HEK293T (cell line): ENCODE measurements at regions of chr2 and their contacts with region 1.

Region 1: GRCh38 chr2:20446917-20447436 is at the start of gene RHOB:
- DNase-seq: peak; percentile 98

Region 2: DNA sequence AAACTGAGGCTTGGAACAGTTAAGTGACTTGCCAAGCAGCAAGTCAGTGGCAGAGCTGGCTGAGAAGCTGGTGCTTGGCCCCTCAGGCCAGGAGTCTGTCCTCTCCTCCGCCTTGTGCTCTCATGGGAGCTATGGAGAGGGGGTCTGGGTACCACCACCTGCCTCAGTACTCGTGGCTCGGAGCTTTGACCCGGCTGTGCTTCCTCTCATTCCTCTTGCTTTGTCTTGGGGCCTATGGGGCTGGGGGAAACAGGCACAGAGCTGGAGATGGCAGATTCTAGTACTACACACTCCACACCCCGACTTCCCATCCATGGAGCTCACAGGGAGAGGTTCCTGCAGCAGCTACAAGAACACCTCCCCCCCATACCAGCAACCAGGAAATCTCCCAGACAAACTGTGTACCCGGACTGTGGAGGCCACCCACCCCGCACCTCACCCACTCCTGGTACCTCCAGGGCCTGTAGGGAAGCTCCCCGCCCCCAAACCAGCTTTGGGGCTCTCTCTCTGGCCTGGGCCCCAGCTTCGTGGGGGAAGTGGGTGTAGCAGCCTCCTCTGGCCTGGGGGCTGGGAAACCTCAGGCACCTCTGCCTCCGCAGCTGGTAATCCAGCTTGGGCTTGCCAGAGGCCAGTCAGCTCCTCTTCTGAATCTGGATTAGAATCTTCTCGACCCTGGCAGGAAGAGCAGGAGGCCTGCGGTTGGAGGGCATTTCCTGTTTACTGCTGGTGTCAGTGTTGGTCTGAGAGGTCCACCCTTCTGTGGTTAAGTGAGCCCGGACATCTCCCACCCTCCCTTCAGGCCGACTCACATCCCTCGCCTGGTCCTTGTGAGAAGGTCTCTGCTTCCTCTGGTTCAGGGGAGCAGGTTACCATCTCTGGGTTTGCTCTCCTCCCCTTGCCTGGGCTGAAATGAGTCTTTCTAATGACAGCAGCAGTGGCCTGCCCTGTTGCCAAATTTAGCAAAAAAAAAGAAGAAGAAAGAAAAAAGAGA is 22.4 kb before region 1 on chr2:
- CTCF ChIA-PET with region 1: interaction called, 6 read pairs
- POLR2A ChIA-PET with region 1: interaction called, 44 read pairs
- DNase-seq: no peak

Region 3: GRCh38 chr2:20509766-20510495 is 63.0 kb after region 1 on chr2:
- CTCF ChIA-PET with region 1: interaction called, 3 read pairs
- POLR2A ChIA-PET with region 1: interaction called, 13 read pairs
- DNase-seq: peak; percentile 80

Region 4: GRCh38 chr2:20584637-20585321 is 137.8 kb after region 1 on chr2:
- CTCF ChIA-PET with region 1: no interaction called
- POLR2A ChIA-PET with region 1: interaction called, 44 read pairs
- DNase-seq: peak; percentile 54

Region 5: GRCh38 chr2:20617892-20618467 is 171.0 kb after region 1 on chr2:
- CTCF ChIA-PET with region 1: interaction called, 7 read pairs
- POLR2A ChIA-PET with region 1: interaction called, 66 read pairs
- DNase-seq: peak; percentile 54

Region 6: DNA sequence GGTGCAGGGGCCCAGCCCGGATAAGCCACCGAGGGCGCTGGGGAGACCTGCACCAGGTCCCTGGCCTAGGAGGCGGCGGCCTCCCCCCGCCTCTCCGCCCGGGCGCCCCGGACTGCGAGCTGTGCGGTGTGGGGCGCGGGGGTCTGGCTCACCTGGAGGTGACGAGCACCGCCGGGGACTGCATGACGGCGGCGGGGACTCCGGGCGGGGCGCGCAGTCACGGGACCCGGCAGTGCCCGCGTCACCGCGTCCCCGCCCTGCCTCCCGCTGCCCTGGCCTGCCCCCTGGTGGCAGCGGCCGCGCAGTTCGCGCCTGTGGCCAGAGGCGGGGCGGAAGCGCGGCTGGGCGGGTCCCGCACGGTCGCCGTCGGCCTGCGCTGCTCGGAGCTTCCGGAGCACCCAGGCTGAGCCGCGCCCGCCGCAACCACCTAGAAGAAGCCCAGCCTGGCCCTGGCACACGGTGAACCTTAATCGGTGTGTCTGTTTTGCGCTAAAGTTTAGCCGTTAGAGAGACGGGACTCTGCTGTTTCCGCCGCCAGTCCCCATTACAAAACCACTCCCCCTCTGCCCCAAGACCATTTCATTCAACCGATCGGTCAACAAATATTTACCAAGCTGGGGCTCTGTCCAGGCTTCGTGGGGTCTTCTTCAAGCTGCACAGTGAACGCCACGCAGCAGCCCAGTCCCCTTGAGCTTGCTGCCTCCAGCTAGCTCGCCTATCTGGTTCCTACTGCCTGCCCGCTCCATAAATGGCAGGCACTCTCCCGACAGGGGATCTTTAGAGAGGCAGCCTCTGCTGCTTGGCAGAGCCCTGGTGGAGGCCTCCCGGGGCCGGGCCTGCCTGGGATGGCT is 204.1 kb after region 1 on chr2 and contains the start of gene HS1BP3:
- CTCF ChIA-PET with region 1: interaction called, 6 read pairs
- POLR2A ChIA-PET with region 1: interaction called, 99 read pairs
- DNase-seq: peak; percentile 96

Region 7: GRCh38 chr2:20755132-20755800 is 308.3 kb after region 1 on chr2:
- CTCF ChIA-PET with region 1: no interaction called
- POLR2A ChIA-PET with region 1: no interaction called
- DNase-seq: no peak